Calu3 (cell line): ENCODE measurements at regions of chrX and their contacts with region 1.

Region 1: DNA sequence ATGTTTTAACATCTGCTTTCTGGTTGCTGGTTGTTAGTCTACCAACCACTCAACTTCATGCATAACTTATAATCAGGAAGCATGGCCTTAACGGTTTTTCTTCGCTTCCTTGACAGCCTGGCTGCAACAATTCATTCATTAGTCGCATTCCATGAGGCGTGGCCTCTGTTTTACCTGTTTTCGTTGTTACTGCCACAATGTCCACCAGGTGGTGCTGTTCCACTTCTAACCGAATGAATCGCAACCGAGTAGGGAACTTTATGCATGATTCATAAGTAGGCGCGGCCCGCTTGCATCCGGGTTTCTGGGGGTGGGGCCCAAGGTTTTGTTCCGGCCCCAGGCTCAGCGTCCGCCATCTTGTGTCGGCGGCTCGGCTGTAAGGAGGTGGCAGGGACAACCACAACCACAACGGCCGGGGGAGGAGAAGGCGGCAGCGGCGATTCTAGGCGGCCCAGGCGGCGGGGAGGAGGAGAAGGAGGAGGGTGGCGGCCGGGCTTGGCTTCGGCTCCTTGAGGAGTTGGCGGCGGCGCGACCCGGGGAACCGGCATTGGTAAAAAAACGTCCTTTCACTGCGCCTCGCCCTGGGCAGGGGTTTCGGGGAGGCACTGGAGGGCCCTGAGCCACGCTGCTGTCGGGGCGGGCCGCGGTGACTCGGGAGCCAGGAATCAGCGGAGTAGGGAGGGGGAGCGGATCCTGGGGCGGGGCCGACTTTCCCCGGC is at the start of gene UBA1:
- DNase-seq: peak; percentile 93
- H3K4me3 Mint-ChIP-seq: peak within 1 kb of the TSS; percentile 80
- H3K27ac Mint-ChIP-seq: peak within 1 kb of the TSS; percentile 96
- H3K4me1 Mint-ChIP-seq: peaks cover 18% of the 10 kb centered on the region
- H3K27me3 Mint-ChIP-seq: no peaks in the 10 kb centered on the region
- CTCF ChIP-seq: peak; percentile 66
- total RNA-seq, gene UBA1: 234 and 240 TPM in 2 replicates

Region 2: DNA sequence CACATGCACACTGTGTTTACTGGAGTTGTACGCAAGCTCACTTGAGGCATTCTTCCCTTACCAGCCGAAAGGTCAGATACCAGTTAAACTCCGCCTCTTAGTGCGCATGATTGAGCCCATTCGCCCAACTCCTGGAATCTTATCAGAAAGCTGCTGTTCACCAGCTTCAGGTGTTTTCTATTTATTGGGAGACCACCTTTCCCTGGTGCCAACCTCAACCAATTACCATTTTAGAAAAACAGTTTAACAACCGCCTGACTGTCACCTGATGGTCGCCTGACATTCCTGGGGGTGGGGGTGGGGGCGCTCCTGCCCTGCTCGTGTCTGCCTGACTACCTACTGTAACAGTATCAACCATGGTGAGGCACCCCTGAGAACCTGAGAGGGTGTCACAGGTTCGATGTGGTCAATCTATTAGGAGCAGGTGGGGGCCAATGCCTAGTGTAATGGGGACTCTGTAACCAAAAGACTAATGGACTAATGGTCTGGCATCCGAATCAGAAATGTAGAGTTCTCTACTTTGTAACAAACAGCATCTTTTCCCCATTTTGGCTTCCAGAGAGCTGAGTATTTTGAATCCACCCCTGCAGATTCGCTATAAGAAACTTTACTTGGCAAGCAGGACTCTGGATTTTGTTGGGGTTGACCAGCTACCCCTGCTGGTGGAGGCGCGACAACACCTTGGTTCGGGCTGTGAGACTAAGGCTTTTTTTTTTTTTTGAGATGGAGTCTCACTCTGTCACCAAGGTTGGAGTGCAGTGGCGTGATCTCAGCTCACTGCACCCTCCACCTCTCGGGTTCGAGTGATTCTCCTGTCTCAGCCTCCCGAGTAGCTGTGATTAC is 118.5 kb after region 1 on chrX:
- CTCF ChIA-PET with region 1: interaction called, 5 read pairs
- intact Hi-C with region 1: loop called (anchors 2 kb)
- DNase-seq: peak; percentile 70
- H3K4me3 Mint-ChIP-seq: no peak overlapping the region
- H3K27ac Mint-ChIP-seq: no peak overlapping the region
- H3K4me1 Mint-ChIP-seq: no peaks in the 10 kb centered on the region
- H3K27me3 Mint-ChIP-seq: no peaks in the 10 kb centered on the region
- CTCF ChIP-seq: peak; percentile 55

Region 3: GRCh38 chrX:47361538-47362511 is 168.2 kb after region 1 on chrX:
- CTCF ChIA-PET with region 1: no interaction called
- intact Hi-C with region 1: no loop called
- DNase-seq: peak; percentile 49
- H3K4me3 Mint-ChIP-seq: peak overlapping the region; percentile 34
- H3K27ac Mint-ChIP-seq: peak overlapping the region; percentile 64
- H3K4me1 Mint-ChIP-seq: peaks cover 8% of the 10 kb centered on the region
- H3K27me3 Mint-ChIP-seq: no peaks in the 10 kb centered on the region
- CTCF ChIP-seq: no peak

Region 4: GRCh38 chrX:47384502-47384901 is 190.9 kb after region 1 on chrX:
- CTCF ChIA-PET with region 1: interaction called, 3 read pairs
- intact Hi-C with region 1: loop called (anchors 2 kb)
- DNase-seq: peak; percentile 78
- H3K4me3 Mint-ChIP-seq: no peak overlapping the region
- H3K27ac Mint-ChIP-seq: no peak overlapping the region
- H3K4me1 Mint-ChIP-seq: no peaks in the 10 kb centered on the region
- H3K27me3 Mint-ChIP-seq: peaks cover 10% of the 10 kb centered on the region
- CTCF ChIP-seq: peak; percentile 53

Region 5: GRCh38 chrX:47482512-47483309 is 289.1 kb after region 1 on chrX and contains the start of gene ZNF41:
- CTCF ChIA-PET with region 1: no interaction called
- intact Hi-C with region 1: loop called (anchors 5 kb)
- DNase-seq: peak; percentile 83
- H3K4me3 Mint-ChIP-seq: peak within 1 kb of the TSS; percentile 83
- H3K27ac Mint-ChIP-seq: peak within 1 kb of the TSS; percentile 90
- H3K4me1 Mint-ChIP-seq: peaks cover 11% of the 10 kb centered on the region
- H3K27me3 Mint-ChIP-seq: no peaks in the 10 kb centered on the region
- CTCF ChIP-seq: no peak
- total RNA-seq, gene ZNF41: 10.8 and 12.2 TPM in 2 replicates

Region 6: GRCh38 chrX:47523297-47523696 is 329.7 kb after region 1 on chrX:
- CTCF ChIA-PET with region 1: interaction called, 5 read pairs
- intact Hi-C with region 1: loop called (anchors 1 kb)
- DNase-seq: peak; percentile 91
- H3K4me3 Mint-ChIP-seq: peak overlapping the region; percentile 59
- H3K27ac Mint-ChIP-seq: no peak overlapping the region
- H3K4me1 Mint-ChIP-seq: no peaks in the 10 kb centered on the region
- H3K27me3 Mint-ChIP-seq: no peaks in the 10 kb centered on the region
- CTCF ChIP-seq: peak; percentile 74

Region 7: GRCh38 chrX:48021026-48021900 is 827.6 kb after region 1 on chrX:
- CTCF ChIA-PET with region 1: no interaction called
- intact Hi-C with region 1: loop called (anchors 10 kb)
- DNase-seq: peak; percentile 79
- H3K4me3 Mint-ChIP-seq: peak overlapping the region; percentile 86
- H3K27ac Mint-ChIP-seq: peak overlapping the region; percentile 99
- H3K4me1 Mint-ChIP-seq: peaks cover 8% of the 10 kb centered on the region
- H3K27me3 Mint-ChIP-seq: no peaks in the 10 kb centered on the region
- CTCF ChIP-seq: no peak